Endothelial cell of umbilical vein (primary cell): ENCODE measurements at regions of chr20 and their contacts with region 1.

Region 1: DNA sequence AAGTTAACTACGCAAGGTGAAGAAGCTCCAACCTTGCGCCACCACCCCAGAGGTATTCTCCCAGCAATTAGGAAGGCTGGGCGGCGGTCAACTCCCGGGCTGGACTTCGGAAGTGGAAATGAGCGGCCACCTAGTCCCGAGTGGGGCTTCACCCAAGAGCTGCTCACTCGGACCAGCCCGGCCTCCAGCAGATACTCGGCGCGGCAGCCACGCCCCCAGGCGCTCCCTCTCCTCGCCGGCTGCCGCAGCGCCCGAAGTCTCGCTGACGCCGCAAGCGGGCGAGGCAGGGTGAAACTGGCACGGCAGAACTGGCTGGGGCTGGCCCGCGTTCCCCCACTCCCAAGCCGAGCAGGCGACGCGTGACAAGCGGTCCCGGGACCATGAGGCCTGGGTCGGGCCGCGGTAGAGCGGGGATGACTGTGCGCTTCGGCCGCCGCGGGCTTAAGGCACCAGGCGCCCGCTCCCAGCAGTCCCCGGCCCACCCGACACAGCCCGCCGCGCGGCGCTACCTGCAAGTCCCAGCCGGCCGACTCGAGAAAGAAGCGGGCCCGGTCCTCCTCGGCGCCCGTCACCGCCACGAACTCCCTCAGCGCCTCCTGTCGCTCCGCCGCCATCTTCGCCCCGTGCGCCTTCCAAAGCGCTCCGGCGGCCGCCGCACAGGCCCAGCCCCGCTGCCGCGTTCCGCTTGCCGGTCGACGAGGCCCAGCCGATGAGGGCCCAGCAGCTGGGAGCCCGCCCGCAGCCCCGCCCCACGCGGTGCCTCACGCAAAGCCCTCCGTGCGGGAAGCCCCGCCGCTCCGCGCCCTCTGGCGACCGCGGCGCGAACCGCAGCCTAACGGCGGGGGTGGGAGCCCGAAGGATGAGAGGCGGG is at the start of gene NSFL1C:
- DNase-seq: peak; percentile 94
- H3K4me3 ChIP-seq: peak within 1 kb of the TSS; percentile 51 to 95 (median 75)
- H3K27ac ChIP-seq: peak within 1 kb of the TSS; percentile 78
- H3K4me1 ChIP-seq: peaks cover 35% of the 10 kb centered on the region
- H3K27me3 ChIP-seq: no peaks in the 10 kb centered on the region
- CTCF ChIP-seq: peak; percentile 69 to 91
- POLR2A ChIP-seq: peak; percentile 76
- total RNA-seq, gene NSFL1C: 95.7 and 107 TPM in 2 replicates

Region 2: GRCh38 chr20:1108437-1108920 is 358.0 kb before region 1 on chr20:
- CTCF ChIA-PET with region 1: no interaction called
- POLR2A ChIA-PET with region 1: no interaction called
- dilution Hi-C with region 1: no loop called
- intact Hi-C with region 1: loop called (anchors 1 kb)
- DNase-seq: peak; percentile 35
- H3K4me3 ChIP-seq: no peak overlapping the region
- H3K27ac ChIP-seq: no peak overlapping the region
- H3K4me1 ChIP-seq: no peaks in the 10 kb centered on the region
- H3K27me3 ChIP-seq: peaks cover 9 to 11% of the 10 kb centered on the region in 2 experiments
- CTCF ChIP-seq: peak; percentile 71 to 90
- POLR2A ChIP-seq: no peak

Region 3: GRCh38 chr20:1118336-1119127 is 347.9 kb before region 1 on chr20 and contains the start of gene PSMF1:
- CTCF ChIA-PET with region 1: no interaction called
- POLR2A ChIA-PET with region 1: no interaction called
- dilution Hi-C with region 1: no loop called
- intact Hi-C with region 1: loop called (anchors 1 kb)
- DNase-seq: peak; percentile 90
- H3K4me3 ChIP-seq: peak within 1 kb of the TSS; percentile 27 to 88 (median 78)
- H3K27ac ChIP-seq: peak within 1 kb of the TSS; percentile 25
- H3K4me1 ChIP-seq: peaks cover 32% of the 10 kb centered on the region
- H3K27me3 ChIP-seq: no peaks in the 10 kb centered on the region
- CTCF ChIP-seq: no peak
- POLR2A ChIP-seq: peak; percentile 90
- total RNA-seq, gene PSMF1: 140 and 142 TPM in 2 replicates

Region 4: GRCh38 chr20:1212607-1213396 is 253.6 kb before region 1 on chr20:
- CTCF ChIA-PET with region 1: interaction called, 9 read pairs
- POLR2A ChIA-PET with region 1: no interaction called
- dilution Hi-C with region 1: no loop called
- intact Hi-C with region 1: loop called (anchors 1 kb)
- DNase-seq: peak; percentile 63
- H3K4me3 ChIP-seq: no peak overlapping the region
- H3K27ac ChIP-seq: no peak overlapping the region
- H3K4me1 ChIP-seq: no peaks in the 10 kb centered on the region
- H3K27me3 ChIP-seq: peaks cover 8 to 39% of the 10 kb centered on the region in 2 experiments
- CTCF ChIP-seq: peak; percentile 81 to 91
- POLR2A ChIP-seq: no peak

Region 5: DNA sequence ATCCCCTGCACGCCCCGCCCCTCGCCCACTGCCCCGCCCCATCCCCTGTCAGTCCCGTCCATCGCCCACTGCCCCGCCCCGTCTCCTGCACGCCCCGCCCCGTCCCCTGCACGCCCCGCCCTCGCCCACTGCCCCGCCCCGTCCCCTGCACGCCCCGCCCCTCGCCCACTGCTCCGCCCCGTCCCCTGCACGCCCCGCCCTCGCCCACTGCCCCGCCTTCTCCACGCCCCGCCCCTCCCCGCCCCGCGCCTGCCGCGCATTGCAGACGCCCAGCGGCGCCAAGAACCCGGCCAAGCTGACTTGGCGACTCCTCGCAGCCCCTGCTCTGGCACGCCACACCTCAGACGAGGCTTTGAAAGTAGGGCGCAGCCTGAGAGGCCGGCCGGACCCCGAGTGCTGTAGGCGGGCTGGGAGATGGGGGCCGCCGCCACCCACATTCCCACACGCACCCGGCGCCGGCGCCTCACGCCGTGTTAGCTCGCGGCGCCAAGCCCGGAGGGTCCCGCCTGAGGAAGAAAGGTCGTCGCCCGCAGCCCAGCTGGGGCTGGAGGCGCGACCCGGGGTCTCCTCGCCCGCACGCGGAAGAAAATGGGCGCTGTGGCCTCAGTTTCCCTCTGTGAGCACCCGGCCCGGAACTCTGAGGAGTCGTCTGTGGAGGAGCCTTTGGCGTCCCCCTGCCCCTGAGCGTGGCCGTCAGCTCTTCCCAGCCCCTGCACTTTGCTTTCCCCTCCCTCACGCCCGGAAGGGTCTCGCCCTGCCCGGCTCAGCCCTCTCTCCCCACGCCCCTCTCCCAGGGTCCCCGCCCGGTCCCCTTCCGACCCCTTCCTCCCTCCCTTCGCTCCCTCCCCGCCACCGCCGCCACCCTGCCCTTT is 240.4 kb before region 1 on chr20 and contains the start of gene RAD21L1:
- CTCF ChIA-PET with region 1: interaction called, 8 read pairs
- POLR2A ChIA-PET with region 1: no interaction called
- dilution Hi-C with region 1: no loop called
- intact Hi-C with region 1: loop called (anchors 1 kb)
- DNase-seq: peak; percentile 50
- H3K4me3 ChIP-seq: peak within 1 kb of the TSS; percentile 70 to 90 (median 71)
- H3K27ac ChIP-seq: peak within 1 kb of the TSS; percentile 70
- H3K4me1 ChIP-seq: peaks cover 6% of the 10 kb centered on the region
- H3K27me3 ChIP-seq: peaks cover 0 to 23% of the 10 kb centered on the region in 2 experiments
- CTCF ChIP-seq: no peak
- POLR2A ChIP-seq: no peak
- total RNA-seq, gene RAD21L1: not detected in 2 replicates

Region 6: DNA sequence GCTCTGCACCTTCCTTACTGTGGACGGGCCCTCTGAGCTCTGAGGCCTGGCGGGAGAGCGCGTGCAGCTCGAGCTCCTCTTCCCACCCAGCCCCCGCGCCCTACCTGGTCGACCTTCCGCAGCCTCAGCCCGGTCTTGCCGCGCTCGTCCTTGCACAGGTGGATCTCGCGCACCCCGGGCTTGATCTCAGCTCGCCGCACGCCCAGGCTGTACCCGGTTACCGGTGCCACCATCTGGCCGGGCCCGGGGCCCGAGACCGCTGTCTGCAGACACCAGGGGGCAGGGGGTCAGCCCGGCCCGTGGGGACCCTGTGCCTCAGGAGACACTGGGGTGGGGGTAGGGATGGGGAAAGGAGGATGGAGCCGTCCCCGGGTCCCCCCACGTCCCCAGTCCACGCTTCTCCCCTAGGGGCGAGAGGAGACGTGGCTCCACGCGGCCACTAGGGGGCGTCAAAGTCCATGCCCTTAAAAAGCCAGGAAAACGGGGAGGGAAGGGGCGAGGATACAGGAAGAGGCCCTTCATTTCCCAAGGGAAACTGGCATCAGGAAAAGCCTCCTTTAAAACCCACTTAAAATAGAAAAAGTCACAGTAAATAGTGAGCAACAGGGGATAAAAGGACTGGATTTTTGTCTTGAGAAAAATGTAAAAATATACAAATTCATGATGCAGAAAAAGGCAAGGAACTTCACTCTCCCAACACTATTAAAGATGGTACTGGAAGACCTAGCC is 153.0 kb before region 1 on chr20:
- CTCF ChIA-PET with region 1: interaction called, 10 read pairs
- POLR2A ChIA-PET with region 1: no interaction called
- dilution Hi-C with region 1: no loop called
- intact Hi-C with region 1: loop called (anchors 1 kb)
- DNase-seq: peak; percentile 78
- H3K4me3 ChIP-seq: peak overlapping the region in 1 of 3 experiments; percentile 8
- H3K27ac ChIP-seq: peak overlapping the region; percentile 61
- H3K4me1 ChIP-seq: peaks cover 9% of the 10 kb centered on the region
- H3K27me3 ChIP-seq: no peaks in the 10 kb centered on the region
- CTCF ChIP-seq: peak; percentile 89 to 95
- POLR2A ChIP-seq: no peak

Region 7: GRCh38 chr20:1491281-1491840 is 24.9 kb after region 1 on chr20 and contains the start of gene SIRPB2:
- CTCF ChIA-PET with region 1: interaction called, 5 read pairs
- POLR2A ChIA-PET with region 1: no interaction called
- dilution Hi-C with region 1: no loop called
- intact Hi-C with region 1: loop called (anchors 1 kb)
- DNase-seq: peak; percentile 96
- H3K4me3 ChIP-seq: peak within 1 kb of the TSS in 2 of 3 experiments; percentile 25 to 47
- H3K27ac ChIP-seq: peak within 1 kb of the TSS; percentile 90
- H3K4me1 ChIP-seq: peaks cover 31% of the 10 kb centered on the region
- H3K27me3 ChIP-seq: peaks cover 0 to 2% of the 10 kb centered on the region in 2 experiments
- CTCF ChIP-seq: no peak
- POLR2A ChIP-seq: peak; percentile 30
- total RNA-seq, gene SIRPB2: 9.5 and 12.3 TPM in 2 replicates